PC-9 (cell line): ENCODE measurements at regions of chr7 and their contacts with region 1.

Region 1: DNA sequence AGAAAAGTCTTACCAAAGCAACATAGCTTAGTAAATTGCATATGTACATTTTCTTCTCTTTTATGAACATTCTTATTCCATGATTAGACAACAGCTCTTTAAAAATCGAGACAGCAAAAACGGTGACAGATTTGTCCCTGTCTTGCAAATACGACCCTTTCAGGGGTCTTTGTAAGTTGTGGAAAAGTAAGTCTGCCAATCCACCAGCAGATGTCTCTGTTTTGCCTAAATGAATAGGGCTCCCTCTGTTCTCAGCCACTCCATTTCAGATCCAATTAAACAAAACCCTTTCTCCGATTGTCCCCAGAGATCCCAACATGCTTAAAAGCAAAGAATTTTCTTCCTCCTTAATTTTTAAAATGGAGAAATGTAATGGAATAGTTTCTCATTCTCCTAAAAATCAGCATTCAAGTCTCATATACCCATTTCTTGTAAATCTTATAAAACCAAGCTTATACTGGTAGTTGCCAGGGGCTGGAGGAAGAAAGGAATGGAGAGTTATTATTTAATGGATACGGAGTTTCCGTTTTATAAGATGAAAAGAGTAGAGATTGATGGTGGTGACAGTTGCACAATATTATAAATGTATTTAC is 61.0 kb upstream of the NFE2L3 start:
- DNase-seq: peak in 1 of 2 experiments; percentile 50
- H3K4me3 ChIP-seq: no peak overlapping the region
- H3K27ac ChIP-seq: no peak overlapping the region
- H3K4me1 ChIP-seq: peaks cover 31% of the 10 kb centered on the region
- H3K27me3 ChIP-seq: no peaks in the 10 kb centered on the region
- CTCF ChIP-seq: peak; percentile 92

Region 2: DNA sequence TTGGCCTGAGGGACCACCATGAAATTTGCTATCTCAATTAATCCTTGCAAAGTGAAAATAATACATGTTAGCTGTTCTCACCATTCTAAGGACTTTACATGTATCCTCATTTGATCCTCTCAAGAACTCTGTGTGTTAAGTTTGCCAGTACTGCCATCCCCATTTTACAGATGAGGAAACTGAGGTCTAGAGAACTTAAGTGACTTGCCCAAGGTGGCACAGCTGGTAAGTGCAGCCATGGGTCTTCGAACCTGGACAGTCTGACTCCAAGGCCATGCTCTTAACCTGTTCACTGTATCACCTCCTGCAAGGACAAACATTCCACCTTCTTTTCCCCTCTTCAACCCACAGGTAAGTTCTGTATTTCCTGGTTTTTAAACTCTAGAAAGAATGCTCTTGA is 24.3 kb before region 1 on chr7:
- CTCF ChIA-PET with region 1: interaction called, 11 read pairs
- POLR2A ChIA-PET with region 1: no interaction called
- intact Hi-C with region 1: no loop called
- DNase-seq: no peak
- H3K4me3 ChIP-seq: no peak overlapping the region
- H3K27ac ChIP-seq: no peak overlapping the region
- H3K4me1 ChIP-seq: no peaks in the 10 kb centered on the region; the same call in 1 of the 2 replicates
- H3K27me3 ChIP-seq: no peaks in the 10 kb centered on the region
- CTCF ChIP-seq: no peak

Region 3: DNA sequence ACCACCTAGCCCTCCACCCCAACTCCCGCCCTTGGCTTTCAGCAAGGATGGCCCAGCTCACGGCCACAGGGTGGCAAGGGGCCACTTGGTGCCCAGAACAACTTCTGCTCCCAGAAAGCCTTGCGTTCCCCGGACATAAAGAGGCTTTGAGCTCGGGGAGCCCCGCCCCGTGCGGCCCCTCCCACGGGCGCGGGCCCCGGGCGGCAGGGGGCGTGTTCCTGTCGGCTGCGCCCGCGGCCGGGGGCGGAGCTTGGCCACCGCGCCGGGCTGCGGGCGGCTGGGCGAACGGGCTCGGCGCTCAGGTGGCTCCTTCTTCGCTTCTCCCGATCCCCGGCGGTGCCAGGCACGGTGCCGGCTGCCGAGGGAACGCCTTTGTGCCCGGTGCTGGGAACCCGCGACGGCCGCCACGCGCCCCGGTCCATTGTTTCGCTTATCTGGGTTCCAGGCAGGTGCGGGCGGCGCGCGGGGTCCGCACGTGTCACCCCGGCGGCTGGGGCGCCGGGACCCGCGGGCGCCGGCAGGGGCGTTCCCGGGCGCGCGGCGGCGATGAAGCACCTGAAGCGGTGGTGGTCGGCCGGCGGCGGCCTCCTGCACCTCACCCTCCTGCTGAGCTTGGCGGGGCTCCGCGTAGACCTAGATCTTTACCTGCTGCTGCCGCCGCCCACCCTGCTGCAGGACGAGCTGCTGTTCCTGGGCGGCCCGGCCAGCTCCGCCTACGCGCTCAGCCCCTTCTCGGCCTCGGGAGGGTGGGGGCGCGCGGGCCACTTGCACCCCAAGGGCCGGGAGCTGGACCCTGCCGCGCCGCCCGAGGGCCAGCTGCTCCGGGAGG is 61.1 kb after region 1 on chr7 and contains the start of gene NFE2L3:
- CTCF ChIA-PET with region 1: interaction called, 4 read pairs
- POLR2A ChIA-PET with region 1: no interaction called
- intact Hi-C with region 1: loop called (anchors 2 kb)
- DNase-seq: peak; percentile 69 to 92
- H3K4me3 ChIP-seq: peak within 1 kb of the TSS; percentile 77
- H3K27ac ChIP-seq: peak within 1 kb of the TSS; percentile 96
- H3K4me1 ChIP-seq: peaks cover 33% of the 10 kb centered on the region
- H3K27me3 ChIP-seq: no peaks in the 10 kb centered on the region
- CTCF ChIP-seq: no peak; the same call in 1 of the 2 replicates
- total RNA-seq, gene NFE2L3: 44.2 and 49.1 TPM in 2 replicates

Region 4: GRCh38 chr7:26187380-26188205 is 96.6 kb after region 1 on chr7:
- CTCF ChIA-PET with region 1: interaction called, 3 read pairs
- POLR2A ChIA-PET with region 1: interaction called, 5 read pairs
- intact Hi-C with region 1: loop called (anchors 1 kb)
- DNase-seq: no peak
- H3K4me3 ChIP-seq: no peak overlapping the region
- H3K27ac ChIP-seq: peak overlapping the region; percentile 41
- H3K4me1 ChIP-seq: peaks cover 3% of the 10 kb centered on the region; the same call in 1 of the 2 replicates
- H3K27me3 ChIP-seq: no peaks in the 10 kb centered on the region
- CTCF ChIP-seq: no peak

Region 5: DNA sequence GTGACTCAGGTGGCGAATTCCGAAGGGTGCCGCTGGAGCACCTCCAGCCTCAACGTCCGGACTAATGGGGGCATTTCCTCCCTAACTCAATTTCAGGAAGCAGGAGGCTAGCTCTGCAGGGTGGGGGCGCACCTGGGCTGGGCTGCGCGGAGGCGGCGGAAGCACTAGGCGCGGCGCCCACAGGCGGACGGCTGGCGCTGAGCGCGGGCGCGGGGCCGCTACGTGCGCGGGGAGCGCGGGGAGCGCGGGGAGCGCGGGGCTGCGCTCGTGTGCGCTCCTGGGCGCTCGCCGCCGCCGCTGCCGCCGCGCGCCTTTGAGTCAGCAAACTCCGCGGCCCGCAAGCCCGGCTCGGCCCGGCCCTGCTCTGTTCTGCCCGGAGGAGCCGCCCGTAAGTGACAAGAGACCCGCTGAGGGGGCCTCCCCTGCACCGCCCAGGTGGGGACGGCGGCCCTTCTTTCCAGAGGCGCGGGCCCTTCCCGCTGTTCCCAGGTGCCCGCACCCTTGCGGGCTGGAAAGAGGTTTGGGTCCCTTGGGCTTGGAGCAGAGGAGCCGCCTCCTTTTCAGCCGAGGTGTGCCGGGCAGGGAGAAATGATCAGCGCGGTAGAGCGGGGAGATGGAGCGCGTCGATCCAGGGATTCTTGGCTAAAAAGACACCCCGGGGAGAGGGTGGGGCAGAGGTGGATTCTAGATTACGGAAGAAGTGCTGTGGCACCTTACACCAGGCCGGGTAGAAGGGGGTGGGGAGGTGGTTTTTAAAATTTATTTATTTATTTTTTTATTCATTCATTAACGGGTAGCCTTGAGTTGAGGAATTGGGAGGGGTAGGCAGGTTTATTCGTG is 200.9 kb after region 1 on chr7 and contains the start of gene SNX10:
- CTCF ChIA-PET with region 1: no interaction called
- POLR2A ChIA-PET with region 1: no interaction called
- intact Hi-C with region 1: loop called (anchors 2 kb)
- DNase-seq: peak; percentile 59 to 76
- H3K4me3 ChIP-seq: peak within 1 kb of the TSS; percentile 88
- H3K27ac ChIP-seq: no peak within 1 kb of the TSS
- H3K4me1 ChIP-seq: peaks cover 13% of the 10 kb centered on the region
- H3K27me3 ChIP-seq: no peaks in the 10 kb centered on the region
- CTCF ChIP-seq: peak; percentile 61; the same call in 1 of the 2 replicates
- total RNA-seq, gene SNX10: 9.1 and 9.8 TPM in 2 replicates

Region 6: GRCh38 chr7:27179503-27180430 is 1088.7 kb after region 1 on chr7:
- CTCF ChIA-PET with region 1: no interaction called
- POLR2A ChIA-PET with region 1: no interaction called
- intact Hi-C with region 1: no loop called
- DNase-seq: peak in 1 of 2 experiments; percentile 62
- H3K4me3 ChIP-seq: no peak overlapping the region
- H3K27ac ChIP-seq: no peak overlapping the region
- H3K4me1 ChIP-seq: peaks cover 9% of the 10 kb centered on the region
- H3K27me3 ChIP-seq: no peaks in the 10 kb centered on the region
- CTCF ChIP-seq: peak; percentile 96